OCI-LY7 (cell line): ENCODE measurements at regions of chr4 and their contacts with region 1.

Region 1: DNA sequence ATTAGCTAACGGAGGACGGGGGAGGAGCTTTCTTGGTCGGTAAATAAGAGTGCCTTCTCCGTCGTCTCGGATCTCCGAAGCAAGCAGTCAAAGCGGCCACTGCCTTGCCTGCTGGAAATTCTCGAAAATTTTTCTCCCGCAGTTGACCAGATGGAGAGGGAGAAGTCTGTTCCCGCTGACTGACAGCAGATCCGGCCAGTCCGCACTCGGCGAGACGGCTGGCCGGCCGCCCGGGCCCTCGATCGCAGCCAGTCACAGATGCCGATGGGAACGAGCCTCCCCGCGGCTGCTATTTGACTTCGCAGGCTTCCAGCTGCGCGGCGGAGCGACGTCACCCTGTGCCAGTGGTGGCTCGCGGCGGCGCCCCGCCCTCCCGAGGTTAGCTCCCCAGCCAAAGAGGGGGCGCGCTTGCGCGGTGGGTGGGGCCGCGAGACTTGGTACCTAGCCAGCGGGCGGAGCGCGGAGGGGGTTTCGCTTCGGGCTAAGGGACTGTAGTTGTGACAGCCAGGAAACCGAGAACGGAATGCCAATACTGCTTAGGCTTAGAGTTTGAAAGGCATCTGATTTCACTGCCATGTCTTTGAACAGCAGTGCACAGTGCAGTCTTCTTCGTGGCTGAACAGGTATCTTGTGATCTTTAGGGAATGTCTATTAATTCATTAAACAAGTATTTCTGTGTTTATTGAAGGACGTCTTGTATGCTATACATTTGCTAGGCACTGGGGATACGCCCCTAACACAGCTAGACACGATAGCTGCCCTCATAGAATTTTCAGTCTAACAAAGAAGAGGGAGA is at the start of gene PPM1K:
- DNase-seq: peak; percentile 99
- H3K4me3 ChIP-seq: peak within 1 kb of the TSS; percentile 79
- H3K27ac ChIP-seq: peak within 1 kb of the TSS; percentile 91
- H3K4me1 ChIP-seq: peaks cover 36% of the 10 kb centered on the region
- CTCF ChIP-seq: no peak; the same call in 1 of the 2 replicates
- total RNA-seq, gene PPM1K: 65.7 and 83.9 TPM in 2 replicates

Region 2: GRCh38 chr4:87530868-87531267 is 753.8 kb before region 1 on chr4:
- CTCF ChIA-PET with region 1: no interaction called
- POLR2A ChIA-PET with region 1: no interaction called
- intact Hi-C with region 1: no loop called
- DNase-seq: no peak
- H3K4me3 ChIP-seq: no peak overlapping the region
- H3K27ac ChIP-seq: no peak overlapping the region
- H3K4me1 ChIP-seq: no peaks in the 10 kb centered on the region
- CTCF ChIP-seq: no peak

Region 3: GRCh38 chr4:88315460-88316017 is 30.9 kb after region 1 on chr4:
- CTCF ChIA-PET with region 1: interaction called, 5 read pairs
- POLR2A ChIA-PET with region 1: interaction called, 48 read pairs
- intact Hi-C with region 1: loop called (anchors 1 kb)
- DNase-seq: no peak
- H3K4me3 ChIP-seq: no peak overlapping the region
- H3K27ac ChIP-seq: no peak overlapping the region
- H3K4me1 ChIP-seq: peaks cover 22% of the 10 kb centered on the region
- CTCF ChIP-seq: no peak

Region 4: GRCh38 chr4:88378691-88379559 is 94.3 kb after region 1 on chr4 and contains the start of gene HERC6:
- CTCF ChIA-PET with region 1: no interaction called
- POLR2A ChIA-PET with region 1: no interaction called
- intact Hi-C with region 1: loop called (anchors 5 kb)
- DNase-seq: peak; percentile 70
- H3K4me3 ChIP-seq: peak within 1 kb of the TSS; percentile 72
- H3K27ac ChIP-seq: no peak within 1 kb of the TSS
- H3K4me1 ChIP-seq: peaks cover 3% of the 10 kb centered on the region
- CTCF ChIP-seq: peak; percentile 66
- total RNA-seq, gene HERC6: 0.09 and 0.28 TPM in 2 replicates

Region 5: GRCh38 chr4:88591787-88592599 is 307.4 kb after region 1 on chr4 and contains the start of gene HERC3:
- CTCF ChIA-PET with region 1: no interaction called
- POLR2A ChIA-PET with region 1: no interaction called
- intact Hi-C with region 1: loop called (anchors 5 kb)
- DNase-seq: peak; percentile 88
- H3K4me3 ChIP-seq: peak within 1 kb of the TSS; percentile 80
- H3K27ac ChIP-seq: no peak within 1 kb of the TSS
- H3K4me1 ChIP-seq: peaks cover 14% of the 10 kb centered on the region
- CTCF ChIP-seq: no peak
- total RNA-seq, gene HERC3: 9.2 and 14.4 TPM in 2 replicates